Transverse colon (tissue), 4 donors: ENCODE measurements at regions of chr9 and their contacts with region 1.

Region 1: DNA sequence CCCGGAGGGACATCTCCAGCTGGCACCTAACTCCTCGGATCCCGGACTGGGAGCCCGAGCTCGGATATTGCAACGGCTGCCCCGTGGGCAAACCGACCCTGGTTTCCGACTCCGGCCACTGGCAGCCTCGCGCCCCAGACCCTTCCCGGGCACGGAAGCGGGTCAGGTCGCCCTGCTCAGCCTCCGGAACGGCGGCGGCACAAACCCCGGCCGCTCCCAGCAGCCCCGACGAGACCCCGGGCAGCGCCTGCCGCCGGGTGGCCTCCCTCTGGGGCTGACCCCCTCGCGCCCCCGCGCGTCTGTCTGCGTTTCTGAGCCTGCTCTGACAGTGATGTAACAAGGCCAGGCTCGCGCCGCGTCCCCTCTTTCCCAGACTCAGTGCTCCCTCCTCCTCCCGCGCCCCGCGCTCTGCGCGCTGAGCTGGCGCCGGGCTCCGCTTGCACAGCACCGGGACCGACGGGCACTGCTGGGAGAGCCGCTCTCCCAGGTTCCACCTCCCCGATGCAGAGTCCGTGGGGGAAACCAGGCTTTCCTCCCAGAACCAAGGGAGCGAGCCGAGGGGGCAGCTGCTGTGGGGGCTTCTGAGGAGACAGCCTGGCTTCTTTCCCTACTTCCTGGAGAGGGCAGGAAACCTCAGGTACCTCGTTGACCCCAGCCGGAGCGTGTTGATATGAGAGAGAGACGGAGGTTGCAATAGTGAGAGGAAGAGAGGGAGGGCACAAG is at the start of gene TMEM215:
- DNase-seq: no peak
- H3K4me3 ChIP-seq: peak within 1 kb of the TSS in 1 of 4 donors; percentile 24
- H3K27ac ChIP-seq: no peak within 1 kb of the TSS
- H3K4me1 ChIP-seq: no peaks in the 10 kb centered on the region
- H3K27me3 ChIP-seq: peaks cover 55% of the 10 kb centered on the region
- CTCF ChIP-seq: no peak
- EP300 ChIP-seq: no peak
- POLR2A ChIP-seq: no peak
- total RNA-seq, gene TMEM215: not detected

Region 2: GRCh38 chr9:32672461-32672860 is 110.9 kb before region 1 on chr9:
- in situ Hi-C with region 1: no loop called
- intact Hi-C with region 1: no loop called
- DNase-seq: no peak
- H3K4me3 ChIP-seq: no peak overlapping the region
- H3K27ac ChIP-seq: no peak overlapping the region
- H3K4me1 ChIP-seq: no peaks in the 10 kb centered on the region
- H3K27me3 ChIP-seq: no peaks in the 10 kb centered on the region
- CTCF ChIP-seq: no peak
- EP300 ChIP-seq: no peak
- POLR2A ChIP-seq: no peak

Region 3: GRCh38 chr9:32723789-32724325 is 59.5 kb before region 1 on chr9:
- in situ Hi-C with region 1: loop called in 1 of 4 experiments (anchors 10 kb)
- intact Hi-C with region 1: no loop called
- DNase-seq: no peak
- H3K4me3 ChIP-seq: no peak overlapping the region
- H3K27ac ChIP-seq: no peak overlapping the region
- H3K4me1 ChIP-seq: no peaks in the 10 kb centered on the region
- H3K27me3 ChIP-seq: no peaks in the 10 kb centered on the region
- CTCF ChIP-seq: no peak
- EP300 ChIP-seq: no peak
- POLR2A ChIP-seq: no peak